ENCODE measurements at regions of chr14 and their contacts with region 1.

Region 1: DNA sequence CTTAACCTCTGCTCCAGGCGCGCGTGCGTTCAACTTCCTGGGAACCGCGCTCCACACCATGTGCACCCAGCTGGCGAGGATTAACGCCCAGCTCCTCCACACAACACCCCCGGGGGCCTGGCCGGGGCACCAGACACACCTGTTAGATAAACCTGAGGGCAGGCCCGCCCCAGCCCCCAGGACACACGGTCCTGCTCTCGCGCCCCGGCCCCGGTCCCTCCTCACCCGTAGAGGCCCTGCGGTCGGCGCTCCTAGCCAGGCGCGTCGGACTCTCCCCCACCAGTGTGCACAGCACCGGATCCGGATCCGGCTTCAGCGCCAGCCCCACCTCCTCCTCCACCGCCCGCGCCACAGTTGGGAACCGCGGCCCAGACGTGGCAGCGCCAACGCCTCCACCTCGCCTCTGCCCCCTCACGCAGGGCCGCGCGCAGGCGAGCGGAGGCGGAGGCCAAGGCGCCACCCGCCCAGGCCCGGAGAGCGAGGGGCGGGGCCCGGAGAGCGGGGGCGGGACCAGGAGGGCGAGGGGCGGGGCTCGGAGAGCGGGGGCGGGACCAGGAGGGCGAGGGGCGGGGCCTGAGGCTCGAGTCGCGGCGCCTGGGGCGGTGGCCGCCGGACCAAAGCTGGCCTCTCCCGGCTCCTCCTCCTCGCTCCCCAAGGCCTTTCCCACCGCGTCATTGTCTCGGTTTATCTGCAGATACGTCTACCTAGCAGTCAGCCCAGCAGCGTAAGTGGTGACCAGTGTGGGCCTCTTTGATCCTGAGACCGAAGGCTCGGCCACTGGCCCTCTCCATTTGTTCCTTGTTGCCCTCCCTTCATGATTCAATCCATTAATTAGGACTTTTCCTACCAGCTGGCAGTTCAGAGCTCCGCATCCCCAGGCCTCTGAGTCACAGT is at the start of gene GNPNAT1:
- DNase-seq: peak; percentile 91
- H3K4me3 ChIP-seq: peak within 1 kb of the TSS; percentile 86
- H3K27ac ChIP-seq: peak within 1 kb of the TSS; percentile 56
- H3K4me1 ChIP-seq: peaks cover 16% of the 10 kb centered on the region
- CTCF ChIP-seq: no peak
- total RNA-seq, gene GNPNAT1: 13.3 and 15.5 TPM in 2 replicates

Region 2: DNA sequence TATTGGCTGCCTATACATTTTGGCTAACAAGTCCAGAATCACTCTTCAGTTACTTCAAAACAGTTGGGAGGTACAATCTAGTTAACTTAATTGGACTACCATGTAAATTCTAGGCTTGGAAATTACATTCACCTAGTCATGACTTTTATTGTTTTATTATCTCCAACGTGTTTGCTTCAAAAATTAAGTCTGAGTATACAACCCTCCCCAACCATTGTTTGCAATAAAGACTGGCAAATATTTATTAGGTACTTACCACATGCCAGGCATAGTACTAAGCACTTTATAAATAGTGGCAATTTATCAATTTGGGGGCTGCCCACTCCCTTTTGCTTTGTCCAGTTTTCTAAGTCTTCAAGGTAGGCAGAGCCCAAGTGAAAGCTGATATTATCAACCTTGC is 269.4 kb before region 1 on chr14:
- CTCF ChIA-PET with region 1: no interaction called
- POLR2A ChIA-PET with region 1: no interaction called
- intact Hi-C with region 1: no loop called
- DNase-seq: no peak
- H3K4me3 ChIP-seq: no peak overlapping the region
- H3K27ac ChIP-seq: no peak overlapping the region
- H3K4me1 ChIP-seq: no peaks in the 10 kb centered on the region
- CTCF ChIP-seq: no peak

Region 3: GRCh38 chr14:52695481-52696091 is 95.9 kb before region 1 on chr14 and contains the start of gene ERO1A:
- CTCF ChIA-PET with region 1: no interaction called
- POLR2A ChIA-PET with region 1: interaction called, 3 read pairs
- intact Hi-C with region 1: loop called (anchors 2 kb)
- DNase-seq: peak; percentile 76
- H3K4me3 ChIP-seq: peak within 1 kb of the TSS; percentile 93
- H3K27ac ChIP-seq: peak within 1 kb of the TSS; percentile 75
- H3K4me1 ChIP-seq: peaks cover 34% of the 10 kb centered on the region
- CTCF ChIP-seq: no peak
- total RNA-seq, gene ERO1A: 35.2 and 43.7 TPM in 2 replicates

Region 4: DNA sequence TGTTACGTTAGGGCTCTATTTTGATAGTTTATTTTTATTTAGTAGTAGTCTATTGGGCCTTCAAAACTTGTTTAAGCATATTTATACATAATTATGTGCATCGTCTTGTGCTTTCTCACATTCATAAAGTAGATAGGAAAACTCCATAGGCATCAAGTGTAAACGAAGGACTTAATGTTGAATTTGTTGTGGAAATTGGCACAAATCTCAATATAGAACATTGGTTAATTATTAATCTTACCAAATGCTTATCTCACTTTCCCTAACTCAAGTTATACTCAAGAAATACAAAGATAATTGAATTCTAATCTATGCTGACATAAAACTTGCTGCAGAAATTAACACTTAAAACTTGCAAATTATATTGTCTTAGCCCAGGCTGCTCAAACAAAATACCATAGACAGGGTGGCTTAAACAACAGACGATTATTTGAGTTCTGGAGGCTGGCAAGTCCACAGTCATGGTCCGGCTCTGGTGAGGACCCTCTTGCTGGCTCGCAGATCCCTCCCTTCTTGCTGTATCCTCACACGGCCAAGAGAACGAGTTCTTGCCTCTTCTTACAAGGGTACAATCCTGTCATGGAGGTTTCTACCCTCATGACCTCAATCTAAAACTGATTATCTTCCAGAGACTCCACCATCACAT is 42.7 kb before region 1 on chr14:
- CTCF ChIA-PET with region 1: no interaction called
- POLR2A ChIA-PET with region 1: interaction called, 3 read pairs
- intact Hi-C with region 1: loop called (anchors 5 kb)
- DNase-seq: no peak
- H3K4me3 ChIP-seq: no peak overlapping the region
- H3K27ac ChIP-seq: no peak overlapping the region
- H3K4me1 ChIP-seq: no peaks in the 10 kb centered on the region
- CTCF ChIP-seq: no peak

Region 5: DNA sequence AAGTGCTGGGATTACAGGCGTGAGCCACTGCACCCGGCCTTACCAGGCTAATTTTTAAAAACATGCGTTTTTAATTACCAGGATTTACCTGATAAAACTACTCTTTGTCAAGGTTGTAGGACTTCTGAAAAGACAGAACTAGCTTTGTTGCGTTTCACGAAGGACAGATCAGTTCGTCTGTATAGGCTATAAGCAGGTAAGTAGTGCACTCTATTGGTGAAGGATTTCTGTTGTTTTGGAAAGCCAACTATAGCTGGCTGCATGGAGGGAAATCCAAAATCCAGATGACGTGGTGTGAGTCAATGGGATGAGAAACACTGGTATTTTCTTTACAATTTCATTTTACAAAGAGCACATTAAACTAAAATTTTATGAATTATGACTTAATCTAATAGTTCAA is 14.6 kb before region 1 on chr14:
- CTCF ChIA-PET with region 1: no interaction called
- POLR2A ChIA-PET with region 1: no interaction called
- intact Hi-C with region 1: no loop called
- DNase-seq: no peak
- H3K4me3 ChIP-seq: no peak overlapping the region
- H3K27ac ChIP-seq: no peak overlapping the region
- H3K4me1 ChIP-seq: no peaks in the 10 kb centered on the region
- CTCF ChIP-seq: peak; percentile 31; the same call in 1 of the 2 replicates